ENCODE measurements at regions of chr17 and their contacts with region 1.

Region 1: DNA sequence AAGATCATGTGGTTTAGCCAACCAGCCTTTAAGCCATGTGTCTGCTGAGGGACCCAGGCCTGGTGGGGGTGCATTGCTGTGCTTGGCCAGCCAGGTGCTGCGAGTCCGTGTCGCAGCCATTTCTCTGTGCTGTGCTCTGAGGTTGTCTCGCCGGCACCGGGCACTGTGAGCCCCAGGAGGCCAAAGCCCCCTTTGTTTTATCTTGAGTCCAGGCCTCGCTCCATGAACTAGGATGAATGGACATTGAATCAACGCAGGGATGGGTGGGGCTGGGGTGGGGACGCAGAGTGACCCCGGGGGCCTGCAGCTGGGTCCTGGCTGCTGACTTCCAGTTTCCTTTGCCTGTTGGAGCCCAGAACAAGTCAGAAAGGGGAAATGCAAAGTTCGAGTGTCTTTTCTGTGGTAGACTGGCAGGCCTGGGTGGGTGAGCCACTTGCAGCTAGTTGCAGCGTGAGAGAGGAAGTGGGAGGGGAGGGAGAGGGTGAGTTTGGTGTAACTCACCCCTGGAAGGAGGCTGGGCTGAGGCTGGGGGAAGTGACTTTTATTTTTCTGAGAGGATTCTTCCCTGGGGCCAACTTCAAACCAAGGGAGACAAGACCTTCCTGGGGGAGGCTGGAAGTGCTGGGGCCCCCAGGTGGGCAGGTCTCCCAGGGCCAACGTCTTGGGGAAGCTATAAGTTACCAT is 324.7 kb downstream of the SEC14L1 start:
- DNase-seq: no peak
- H3K4me3 ChIP-seq: no peak overlapping the region
- CTCF ChIP-seq: no peak

Region 2: DNA sequence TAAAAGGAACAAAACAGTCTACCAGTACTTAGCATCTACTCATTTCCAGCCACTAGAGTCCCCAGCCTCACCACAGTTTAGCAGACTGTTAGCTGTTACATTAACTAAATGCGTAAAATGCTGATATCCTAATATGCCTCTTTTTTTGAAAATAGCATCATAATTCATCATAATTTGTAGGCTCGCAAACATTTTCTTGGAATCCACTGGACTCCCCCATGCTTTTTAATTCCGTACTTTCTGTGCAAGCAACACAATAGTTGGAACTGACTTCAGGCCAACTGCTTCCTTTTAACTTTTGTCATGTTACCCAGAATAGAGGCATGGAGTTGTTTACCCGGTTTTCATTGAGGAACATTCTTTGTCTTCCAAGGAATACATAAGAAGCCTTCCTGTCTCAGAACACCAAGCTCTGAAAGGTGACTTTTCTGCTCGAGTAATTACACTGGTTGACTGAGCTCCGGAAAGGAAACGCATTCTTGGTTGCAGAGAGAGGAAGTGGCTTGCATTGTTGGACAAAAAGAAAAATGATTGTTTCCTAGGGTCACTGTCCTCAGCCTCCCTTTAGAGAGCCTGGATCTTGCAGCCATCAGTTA is 355.6 kb before region 1 on chr17:
- in situ Hi-C with region 1: loop called (anchors 25 kb)
- DNase-seq: peak; percentile 61
- H3K4me3 ChIP-seq: no peak overlapping the region
- CTCF ChIP-seq: no peak

Region 3: DNA sequence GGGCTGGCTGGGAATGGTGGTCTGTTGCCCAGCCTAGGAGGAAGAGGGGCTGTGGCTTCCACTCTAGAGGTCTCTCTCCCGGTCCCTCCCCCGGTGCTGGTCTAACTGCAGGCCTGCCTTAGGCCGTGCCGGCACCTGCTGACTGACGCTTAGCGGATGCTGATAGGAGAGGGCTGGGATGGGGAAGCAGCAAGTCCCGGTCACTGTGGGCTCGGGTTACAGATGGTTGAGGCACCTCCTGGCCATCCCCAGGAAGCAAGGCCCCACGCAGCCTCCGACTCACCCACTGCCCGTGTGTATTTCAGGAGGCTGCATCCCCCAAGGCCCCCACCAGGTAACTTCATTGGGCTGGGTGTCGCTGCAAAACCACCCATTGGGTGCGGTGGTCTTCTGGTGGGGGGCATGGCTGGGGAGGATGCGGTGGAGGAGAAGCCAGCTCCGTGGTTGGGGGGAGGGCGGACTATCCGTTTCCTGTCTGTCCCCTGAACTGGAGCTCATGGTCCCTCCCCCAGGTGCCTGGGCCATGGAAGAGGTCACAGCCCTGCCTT is 45.9 kb before region 1 on chr17:
- in situ Hi-C with region 1: no loop called
- DNase-seq: no peak
- H3K4me3 ChIP-seq: no peak overlapping the region
- CTCF ChIP-seq: no peak